HEK293T (cell line): ENCODE measurements at regions of chr13 and their contacts with region 1.

Region 1: GRCh38 chr13:49996951-49997895 is at the start of gene TRIM13:
- DNase-seq: peak; percentile 68

Region 2: GRCh38 chr13:50081679-50082425 is 84.6 kb after region 1 on chr13:
- CTCF ChIA-PET with region 1: no interaction called
- POLR2A ChIA-PET with region 1: interaction called, 20 read pairs
- DNase-seq: peak; percentile 91